PC-3 (cell line): ENCODE measurements at regions of chr11 and their contacts with region 1.

Region 1: DNA sequence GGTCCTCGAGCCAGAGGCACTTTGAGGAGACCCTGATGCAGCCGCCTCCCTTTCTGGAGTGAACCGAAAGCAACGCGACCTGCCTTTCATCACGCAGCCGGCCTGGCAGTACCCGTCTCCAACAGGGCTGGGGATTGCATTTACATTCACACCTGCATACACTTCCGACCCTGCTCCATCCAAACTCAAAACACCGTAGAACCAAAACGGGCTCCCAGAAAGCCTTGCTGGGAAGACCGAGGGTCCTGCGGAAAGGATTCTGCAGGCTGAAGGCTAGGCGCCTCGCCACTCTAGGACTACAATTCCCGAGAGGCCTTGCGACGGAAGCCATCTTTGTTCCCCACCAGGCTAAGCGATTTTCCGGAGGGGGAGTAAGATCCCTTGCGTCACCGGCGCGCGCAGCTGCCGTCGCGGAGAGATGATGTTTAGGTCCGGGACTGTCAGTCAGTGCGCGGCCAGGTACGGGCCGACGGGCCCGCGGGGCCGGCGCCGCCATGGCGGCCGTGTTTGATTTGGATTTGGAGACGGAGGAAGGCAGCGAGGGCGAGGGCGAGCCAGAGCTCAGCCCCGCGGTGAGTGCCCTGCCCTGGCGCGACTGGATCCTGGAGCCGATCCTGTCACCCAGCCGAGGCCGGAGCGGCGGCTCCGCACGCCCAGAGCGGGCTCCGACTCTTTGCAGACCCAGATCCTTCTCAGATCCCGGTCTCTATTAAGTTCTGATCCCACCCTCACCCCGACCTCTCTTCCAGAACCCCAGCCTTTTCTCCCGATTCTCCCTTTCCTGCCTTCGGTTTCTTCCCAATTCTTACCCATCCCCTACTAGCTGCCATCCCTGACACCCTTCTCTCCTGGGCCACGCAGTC is at the start of gene RPS6KB2:
- DNase-seq: peak; percentile 99
- ATAC-seq: peak; percentile 87
- H3K4me3 ChIP-seq: peak within 1 kb of the TSS; percentile 96
- H3K27ac ChIP-seq: peak within 1 kb of the TSS; percentile 18
- H3K4me1 ChIP-seq: peaks cover 10% of the 10 kb centered on the region
- H3K27me3 ChIP-seq: no peaks in the 10 kb centered on the region
- CTCF ChIP-seq: no peak
- total RNA-seq, gene RPS6KB2: 170 and 208 TPM in 2 replicates

Region 2: DNA sequence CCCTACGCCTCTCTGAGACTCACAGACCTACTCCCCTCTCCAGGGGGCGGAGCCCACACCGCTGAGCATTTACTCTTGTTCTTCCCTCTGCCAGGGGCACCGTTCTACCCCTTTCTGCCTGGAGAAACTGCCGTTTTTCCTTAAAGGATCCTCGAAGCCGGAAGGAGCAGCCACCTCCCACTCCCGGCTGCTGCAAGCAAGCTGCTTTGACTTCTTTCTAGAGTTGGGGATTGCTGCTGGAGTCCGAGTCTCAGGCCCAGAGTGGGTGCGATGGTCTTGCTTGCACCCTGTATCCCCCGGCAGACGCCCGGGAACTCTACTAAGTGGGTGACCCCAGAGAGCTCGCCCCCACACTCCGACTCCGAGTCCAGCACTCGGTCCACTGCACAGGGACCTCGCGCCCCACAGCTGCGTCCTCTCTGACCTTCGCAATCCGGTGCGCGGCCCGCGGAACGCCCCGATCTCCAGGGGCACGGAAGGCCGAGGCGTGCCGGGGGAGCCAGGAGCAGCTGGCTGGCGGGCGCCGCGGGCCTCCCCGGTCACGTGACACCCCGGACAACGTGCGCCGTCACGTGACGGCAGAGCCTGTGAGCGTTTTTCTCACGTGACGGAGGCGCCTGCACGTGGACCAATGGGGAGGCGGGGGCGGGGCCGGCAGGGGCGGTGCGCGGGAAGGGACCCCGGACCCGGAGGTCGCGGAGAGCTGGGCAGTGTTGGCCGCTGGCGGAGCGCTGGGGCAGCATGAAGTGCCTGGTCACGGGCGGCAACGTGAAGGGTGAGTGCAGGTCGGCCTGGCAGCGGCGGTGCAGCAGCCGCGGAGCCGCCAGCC is 36.8 kb before region 1 on chr11 and contains the start of gene RAD9A:
- CTCF ChIA-PET with region 1: no interaction called
- POLR2A ChIA-PET with region 1: no interaction called
- intact Hi-C with region 1: no loop called
- DNase-seq: peak; percentile 97
- ATAC-seq: peak; percentile 66
- H3K4me3 ChIP-seq: peak within 1 kb of the TSS; percentile 81
- H3K27ac ChIP-seq: peak within 1 kb of the TSS; percentile 81
- H3K4me1 ChIP-seq: peaks cover 8% of the 10 kb centered on the region; the same call in 1 of the 2 replicates
- H3K27me3 ChIP-seq: no peaks in the 10 kb centered on the region
- CTCF ChIP-seq: no peak
- total RNA-seq, gene RAD9A: 45.5 and 48.9 TPM in 2 replicates

Region 3: GRCh38 chr11:67442504-67443405 is 14.5 kb after region 1 on chr11:
- CTCF ChIA-PET with region 1: no interaction called
- POLR2A ChIA-PET with region 1: interaction called, 6 read pairs
- intact Hi-C with region 1: loop called (anchors 2 kb)
- DNase-seq: peak; percentile 29
- ATAC-seq: peak; percentile 23
- H3K4me3 ChIP-seq: peak overlapping the region; percentile 82
- H3K27ac ChIP-seq: peak overlapping the region; percentile 31
- H3K4me1 ChIP-seq: 0 out of 2 replicates have a peak, but pooled peaks cover 6% of the 10 kb centered on the region
- H3K27me3 ChIP-seq: no peaks in the 10 kb centered on the region
- CTCF ChIP-seq: no peak

Region 4: GRCh38 chr11:67468835-67469811 is 40.8 kb after region 1 on chr11 and contains the start of gene TMEM134:
- CTCF ChIA-PET with region 1: no interaction called
- POLR2A ChIA-PET with region 1: no interaction called
- intact Hi-C with region 1: loop called (anchors 5 kb)
- DNase-seq: peak; percentile 92
- ATAC-seq: peak; percentile 65
- H3K4me3 ChIP-seq: peak within 1 kb of the TSS; percentile 85
- H3K27ac ChIP-seq: peak within 1 kb of the TSS; percentile 90
- H3K4me1 ChIP-seq: peaks cover 31% of the 10 kb centered on the region
- H3K27me3 ChIP-seq: no peaks in the 10 kb centered on the region
- CTCF ChIP-seq: peak; percentile 65
- total RNA-seq, gene TMEM134: 73.5 and 107 TPM in 2 replicates